Aorta (tissue), 5 donors: ENCODE measurements at regions of chr17 and their contacts with region 1.

Region 1: GRCh38 chr17:20063665-20064648 is 54.8 kb downstream of the SPECC1 start:
- DNase-seq: peak; percentile 90
- ATAC-seq: peak; percentile 88
- H3K4me3 ChIP-seq: no peak overlapping the region
- H3K27ac ChIP-seq: peak overlapping the region; percentile 96 to 98
- H3K4me1 ChIP-seq: peaks cover 0 to 4% of the 10 kb centered on the region in 2 donors
- H3K27me3 ChIP-seq: no peaks in the 10 kb centered on the region

Region 2: GRCh38 chr17:20095336-20096080 is 31.6 kb after region 1 on chr17:
- intact Hi-C with region 1: loop called in 1 of 2 experiments (anchors 5 kb)
- DNase-seq: peak; percentile 83 to 90
- ATAC-seq: peak; percentile 74
- H3K4me3 ChIP-seq: no peak overlapping the region
- H3K27ac ChIP-seq: peak overlapping the region in 1 of 2 donors; percentile 12
- H3K4me1 ChIP-seq: peaks cover 1 to 13% of the 10 kb centered on the region in 2 donors
- H3K27me3 ChIP-seq: no peaks in the 10 kb centered on the region